ENCODE measurements at regions of chr20 and their contacts with region 1.

Region 1: GRCh38 chr20:47397652-47398301 is 41.3 kb upstream of the ZMYND8 start:
- DNase-seq: no peak

Region 2: GRCh38 chr20:47216819-47217410 is 180.9 kb before region 1 on chr20:
- intact Hi-C with region 1: no loop called
- DNase-seq: no peak

Region 3: DNA sequence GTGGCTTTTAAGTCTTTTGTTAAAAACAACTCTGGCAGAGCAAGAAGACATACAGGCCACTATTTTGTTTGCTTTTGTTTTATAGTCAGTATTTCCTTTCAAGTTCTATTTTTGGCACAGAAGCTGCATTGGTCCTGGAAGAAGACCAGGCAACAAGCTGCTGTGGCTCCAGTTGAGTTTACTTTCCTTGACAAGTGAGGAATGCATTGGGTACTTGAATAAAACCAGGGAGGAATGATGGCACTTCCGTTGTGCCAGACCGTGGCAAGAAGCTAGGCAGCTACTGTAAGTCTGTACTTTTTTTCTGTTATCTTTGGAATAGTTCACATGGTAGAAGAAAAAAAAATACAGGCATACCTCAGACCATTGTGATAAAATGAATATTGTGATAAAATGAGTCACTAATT is 170.2 kb after region 1 on chr20:
- intact Hi-C with region 1: no loop called
- DNase-seq: no peak

Region 4: GRCh38 chr20:47614703-47615309 is 217.0 kb after region 1 on chr20:
- intact Hi-C with region 1: loop called (anchors 5 kb)
- DNase-seq: no peak

Measured in cardiac septum (tissue), 1 donor.